ENCODE measurements at regions of chr12 and their contacts with region 1.

Region 1: GRCh38 chr12:57069523-57069922 is 9.1 kb downstream of the NEMP1 start:
- DNase-seq: no peak
- ATAC-seq: peak; percentile 95

Region 2: DNA sequence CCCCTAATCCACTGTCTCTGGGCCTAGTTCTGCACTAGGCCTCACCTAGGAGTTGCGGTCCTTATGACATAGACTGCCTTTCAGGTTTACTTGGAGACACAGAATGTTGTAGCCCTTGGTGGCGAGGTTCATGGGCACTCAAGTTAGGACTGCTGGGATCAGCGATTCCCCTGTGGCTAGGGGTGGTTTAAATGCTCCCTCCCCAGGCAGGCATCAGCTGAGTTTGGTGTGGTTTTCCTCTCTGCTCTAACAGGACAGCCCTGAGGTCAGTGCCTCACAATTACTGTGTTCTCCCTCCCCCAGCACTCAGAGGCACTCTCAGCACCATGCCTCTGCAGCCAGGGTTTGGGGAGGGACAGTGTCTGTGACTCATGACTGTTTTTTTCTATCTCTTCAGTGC is 89.9 kb before region 1 on chr12:
- intact Hi-C with region 1: no loop called
- DNase-seq: no peak
- ATAC-seq: no peak

Region 3: DNA sequence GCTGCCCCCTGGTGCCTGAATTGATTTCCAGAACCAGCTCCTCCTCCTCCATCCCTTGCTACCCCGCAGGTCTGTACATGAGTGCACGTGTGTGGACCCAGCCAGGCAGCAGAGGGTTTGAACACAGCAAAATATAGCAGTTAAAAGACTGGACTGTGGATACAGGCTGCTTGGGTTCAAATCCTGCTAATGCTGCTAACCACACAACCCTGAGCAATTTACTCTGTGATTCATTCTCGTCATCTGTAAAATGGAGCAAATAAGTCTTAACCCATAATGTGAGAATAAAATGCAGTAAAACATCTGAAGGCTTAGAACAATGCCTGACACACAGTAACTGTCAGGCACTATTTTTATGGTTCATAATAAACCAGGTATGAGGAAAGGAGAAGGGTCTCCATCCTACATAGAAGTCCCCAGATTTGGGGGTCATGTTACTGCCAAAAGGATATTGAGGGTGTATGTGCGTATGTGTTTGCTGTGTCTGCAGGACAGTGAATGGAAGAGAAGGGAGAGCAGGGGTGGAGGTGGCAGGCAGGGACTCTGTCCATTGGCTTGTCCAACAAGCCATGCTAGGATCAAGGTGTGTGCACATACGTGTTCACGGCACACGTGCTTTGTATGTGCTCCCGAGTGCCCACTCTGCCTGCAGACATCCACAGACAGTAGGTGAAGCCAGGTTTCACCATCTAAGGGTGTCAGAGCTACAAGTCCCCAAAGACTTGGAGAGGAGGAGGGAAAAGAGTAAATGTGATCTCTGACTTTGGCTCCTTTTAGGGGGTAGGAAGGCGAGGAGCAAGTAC is 43.2 kb after region 1 on chr12:
- intact Hi-C with region 1: loop called (anchors 2 kb)
- DNase-seq: peak; percentile 25
- ATAC-seq: no peak

Region 4: GRCh38 chr12:57522011-57522886 is 452.7 kb after region 1 on chr12 and contains the start of gene MBD6:
- intact Hi-C with region 1: no loop called
- DNase-seq: peak; percentile 96
- ATAC-seq: peak; percentile 47
- total RNA-seq, gene MBD6: 35.2 TPM